GM18951 (cell line): ENCODE measurements at regions of chr18 and their contacts with region 1.

Region 1: DNA sequence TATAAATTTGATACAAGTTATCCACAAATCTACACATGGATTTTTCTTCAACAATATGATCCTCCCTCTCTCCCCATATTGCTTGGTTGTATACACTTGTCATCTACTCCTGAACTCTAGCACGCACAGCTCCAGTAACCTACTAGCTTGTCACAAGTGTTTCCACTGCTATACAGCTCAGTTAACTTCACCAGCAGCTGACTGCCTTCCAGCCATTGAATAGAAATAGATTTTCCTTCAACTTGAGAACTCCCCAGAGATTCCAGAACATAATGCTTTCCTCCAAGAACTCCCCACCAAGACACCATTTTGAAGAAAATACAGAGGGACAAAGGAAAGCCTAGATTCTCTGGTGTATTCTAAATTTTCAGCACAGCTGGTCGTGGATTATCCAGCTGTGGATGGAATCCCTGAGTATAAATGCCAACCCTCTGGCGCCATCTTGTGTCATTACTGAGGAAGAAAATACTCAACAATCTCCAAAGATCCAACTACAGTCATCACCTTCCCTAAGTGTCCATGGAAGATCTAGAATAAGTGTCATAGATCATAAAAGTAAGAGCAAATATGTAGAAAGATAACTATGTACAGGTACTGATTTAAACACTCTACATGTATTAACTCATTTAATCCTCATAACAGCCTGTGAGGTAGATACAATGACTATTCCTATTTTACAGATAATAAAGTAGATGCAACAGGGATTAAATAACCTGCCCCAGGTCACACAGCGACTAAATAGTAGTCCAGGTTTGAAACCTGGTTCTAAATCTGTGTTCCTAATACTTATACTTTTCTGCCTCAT is 156.7 kb downstream of the ARHGAP28 start:
- POLR2A ChIP-seq: no peak

Region 2: GRCh38 chr18:6561420-6561861 is 324.8 kb before region 1 on chr18:
- in situ Hi-C with region 1: loop called (anchors 25 kb)
- POLR2A ChIP-seq: no peak